ENCODE measurements at regions of chr19 and their contacts with region 1.

Region 1: DNA sequence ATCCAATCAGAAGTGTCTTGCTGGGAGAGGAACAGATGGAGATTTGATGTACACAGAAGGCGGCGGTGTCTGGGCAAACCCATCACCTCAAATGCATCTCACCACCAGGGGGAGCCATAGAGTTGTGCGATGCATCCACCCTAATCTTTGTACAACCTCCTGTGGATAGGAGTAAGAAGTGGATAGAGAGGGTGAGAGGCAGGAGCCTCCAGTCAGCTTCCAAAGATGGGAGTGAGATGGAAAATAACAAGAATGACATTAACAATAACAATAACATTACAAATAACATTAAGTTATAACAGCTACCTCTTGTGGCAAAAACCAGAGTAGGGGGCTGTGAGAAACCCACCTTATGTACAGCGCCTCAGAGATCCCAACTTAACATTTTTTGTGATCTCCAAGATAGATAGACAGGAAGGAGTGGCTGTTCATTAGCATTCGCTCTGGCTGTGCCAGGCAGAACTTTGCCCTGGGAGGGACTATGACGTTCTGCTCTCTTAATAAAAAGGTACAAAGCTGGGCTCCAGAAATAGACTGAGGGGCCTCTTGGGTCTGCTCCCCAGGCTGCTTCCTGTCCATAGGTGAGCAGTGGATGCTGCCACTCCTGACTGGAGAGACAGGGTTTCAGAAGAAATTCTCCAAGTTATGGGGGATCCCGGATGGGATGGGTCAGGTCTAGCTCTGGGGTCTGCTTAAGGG is 5.2 kb upstream of the CEACAM18 start:
- DNase-seq: peak; percentile 86
- H3K4me3 Mint-ChIP-seq: no peak overlapping the region
- H3K27ac Mint-ChIP-seq: no peak overlapping the region
- H3K4me1 Mint-ChIP-seq: peaks cover 7% of the 10 kb centered on the region
- H3K27me3 Mint-ChIP-seq: peaks cover 2% of the 10 kb centered on the region

Region 2: GRCh38 chr19:51461723-51462161 is 11.4 kb before region 1 on chr19:
- CTCF ChIA-PET with region 1: interaction called, 11 read pairs
- POLR2A ChIA-PET with region 1: no interaction called
- DNase-seq: no peak
- H3K4me3 Mint-ChIP-seq: no peak overlapping the region
- H3K27ac Mint-ChIP-seq: no peak overlapping the region
- H3K4me1 Mint-ChIP-seq: peaks cover 7% of the 10 kb centered on the region
- H3K27me3 Mint-ChIP-seq: peaks cover 28% of the 10 kb centered on the region

Region 3: DNA sequence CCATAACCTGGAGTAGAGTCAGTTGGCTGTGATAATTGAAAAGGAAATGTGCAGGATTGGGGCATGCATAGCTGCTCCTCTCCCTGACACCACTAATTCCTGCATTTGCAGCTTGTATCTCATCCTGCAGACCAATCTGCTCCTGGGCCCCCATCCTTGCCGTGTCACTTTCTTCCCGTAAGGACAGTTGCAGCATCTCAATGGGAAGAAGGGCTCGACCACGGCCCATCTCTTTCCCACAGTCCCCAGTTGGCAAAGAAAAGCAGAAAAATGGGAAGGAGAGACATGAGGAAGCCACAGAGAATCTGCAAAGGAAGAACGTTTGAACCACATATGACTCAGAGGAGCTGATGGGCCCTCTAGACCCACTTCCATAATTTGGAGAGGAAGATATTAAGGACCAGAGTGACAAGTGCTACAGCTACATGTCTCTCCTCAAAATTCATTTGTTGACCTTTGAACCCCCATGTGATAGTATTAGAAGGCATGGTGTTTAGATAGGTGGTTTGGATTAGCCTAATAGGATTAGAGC is 30.2 kb after region 1 on chr19:
- CTCF ChIA-PET with region 1: no interaction called
- POLR2A ChIA-PET with region 1: no interaction called
- DNase-seq: no peak
- H3K4me3 Mint-ChIP-seq: no peak overlapping the region
- H3K27ac Mint-ChIP-seq: no peak overlapping the region
- H3K4me1 Mint-ChIP-seq: peaks cover 30% of the 10 kb centered on the region
- H3K27me3 Mint-ChIP-seq: no peaks in the 10 kb centered on the region